ENCODE measurements at regions of chr12 and their contacts with region 1.

Region 1: DNA sequence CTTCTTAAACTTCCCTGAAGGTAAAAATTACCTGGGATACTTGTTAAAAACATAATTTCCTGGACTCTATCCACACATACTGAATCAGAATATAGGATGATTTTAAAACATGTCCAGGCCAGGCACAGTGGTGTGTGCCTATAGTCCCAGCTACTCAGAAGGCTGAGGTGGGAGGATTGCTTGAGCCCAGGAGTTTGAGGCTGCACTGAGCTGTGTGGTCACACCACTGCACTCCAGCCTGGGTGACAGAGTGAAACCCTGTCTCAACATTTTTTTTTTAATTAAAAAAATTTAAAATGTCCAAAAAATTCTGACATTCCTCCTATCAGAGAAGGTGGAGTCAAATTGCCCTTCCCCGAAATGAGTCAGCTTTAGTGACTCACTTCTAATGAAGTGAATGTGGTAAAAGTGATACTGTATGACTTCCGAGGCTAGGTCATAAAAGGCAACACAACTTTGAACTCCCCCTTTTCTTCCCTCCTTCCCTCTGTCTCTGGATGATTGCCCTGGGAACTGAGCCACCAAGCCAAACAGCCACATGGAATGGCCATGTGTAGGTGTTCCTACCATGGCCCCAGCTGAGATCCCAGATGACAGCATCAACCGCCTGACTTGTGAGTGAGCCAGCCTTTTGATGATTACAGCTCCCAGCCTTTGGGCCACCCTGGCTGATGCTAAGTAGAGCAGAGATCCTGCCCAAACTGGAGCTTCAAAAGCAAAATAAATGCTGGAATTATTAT is 36.3 kb downstream of the LIMA1 start:
- DNase-seq: peak; percentile 62
- ATAC-seq: peak; percentile 80
- H3K4me3 ChIP-seq: peak overlapping the region; percentile 5; the same call in 1 of the 2 replicates
- H3K27ac ChIP-seq: peak overlapping the region; percentile 83
- H3K4me1 ChIP-seq: peaks cover 38% of the 10 kb centered on the region
- H3K27me3 ChIP-seq: no peaks in the 10 kb centered on the region
- CTCF ChIP-seq: no peak
- EP300 ChIP-seq: peak in 1 of 2 experiments; percentile 65; a peak in 1 of 4 replicates
- POLR2A ChIP-seq: no peak
- RAD21 ChIP-seq: no peak

Region 2: GRCh38 chr12:50234347-50234746 is 12.7 kb before region 1 on chr12:
- CTCF ChIA-PET with region 1: interaction called, 7 read pairs
- POLR2A ChIA-PET with region 1: interaction called, 8 read pairs
- RAD21 ChIA-PET with region 1: interaction called, 6 read pairs
- SMC1A ChIA-PET with region 1: interaction called, 26 read pairs
- in situ Hi-C with region 1: no loop called
- intact Hi-C with region 1: no loop called
- DNase-seq: no peak
- ATAC-seq: peak; percentile 76
- H3K4me3 ChIP-seq: no peak overlapping the region
- H3K27ac ChIP-seq: no peak overlapping the region
- H3K4me1 ChIP-seq: no peaks in the 10 kb centered on the region
- H3K27me3 ChIP-seq: no peaks in the 10 kb centered on the region
- CTCF ChIP-seq: no peak
- EP300 ChIP-seq: no peak
- POLR2A ChIP-seq: no peak
- RAD21 ChIP-seq: no peak

Region 3: DNA sequence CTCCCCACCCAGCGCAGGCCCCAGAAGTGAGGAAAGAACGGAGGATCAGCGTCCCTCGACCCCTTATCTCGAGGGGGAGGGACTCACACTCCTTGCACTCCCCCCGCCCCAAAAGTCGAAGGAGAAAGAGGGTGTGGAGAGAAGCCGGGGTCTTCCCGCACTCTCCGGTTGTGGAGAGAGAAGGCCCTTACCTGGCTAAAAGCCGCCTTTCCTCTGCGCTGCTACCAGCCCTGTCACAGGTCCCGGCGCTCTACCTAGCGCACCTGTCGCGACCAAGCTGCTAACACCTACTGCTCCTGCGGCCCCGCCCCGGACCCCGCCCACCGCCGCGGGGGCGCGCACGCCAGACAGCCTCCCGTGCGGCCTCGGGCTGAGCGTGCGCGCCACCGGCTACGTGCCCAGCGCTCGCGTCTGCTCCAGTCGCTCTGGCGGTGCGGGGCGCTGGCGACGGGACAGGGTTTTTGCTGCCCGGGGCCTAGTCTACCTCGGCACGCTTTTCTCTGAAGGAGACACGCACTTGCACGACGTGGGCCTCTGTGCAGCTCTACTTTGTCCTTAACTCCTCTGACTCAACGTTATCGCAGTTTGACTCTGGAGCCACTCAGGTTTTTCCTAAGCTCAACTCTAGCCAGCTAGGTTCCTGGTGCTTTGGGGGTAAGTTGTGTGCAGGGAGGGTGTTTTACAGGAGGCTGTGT is 36.3 kb after region 1 on chr12 and contains the start of gene LIMA1:
- CTCF ChIA-PET with region 1: interaction called, 10 read pairs
- POLR2A ChIA-PET with region 1: interaction called, 7 read pairs
- RAD21 ChIA-PET with region 1: interaction called, 11 read pairs
- SMC1A ChIA-PET with region 1: interaction called, 11 read pairs
- in situ Hi-C with region 1: no loop called
- intact Hi-C with region 1: no loop called
- DNase-seq: peak; percentile 37
- ATAC-seq: peak; percentile 98
- H3K4me3 ChIP-seq: peak within 1 kb of the TSS; percentile 83
- H3K27ac ChIP-seq: peak within 1 kb of the TSS; percentile 66
- H3K4me1 ChIP-seq: peaks cover 10% of the 10 kb centered on the region
- H3K27me3 ChIP-seq: peaks cover 0 to 3% of the 10 kb centered on the region in 2 experiments; a peak in 2 of 4 replicates
- CTCF ChIP-seq: peak; percentile 19 to 37 (median 23); a peak in 2 of 6 replicates
- EP300 ChIP-seq: no peak
- POLR2A ChIP-seq: peak; percentile 93
- RAD21 ChIP-seq: peak; percentile 31
- polyA plus RNA-seq, gene LIMA1: 56.6 to 58.2 TPM

Region 4: DNA sequence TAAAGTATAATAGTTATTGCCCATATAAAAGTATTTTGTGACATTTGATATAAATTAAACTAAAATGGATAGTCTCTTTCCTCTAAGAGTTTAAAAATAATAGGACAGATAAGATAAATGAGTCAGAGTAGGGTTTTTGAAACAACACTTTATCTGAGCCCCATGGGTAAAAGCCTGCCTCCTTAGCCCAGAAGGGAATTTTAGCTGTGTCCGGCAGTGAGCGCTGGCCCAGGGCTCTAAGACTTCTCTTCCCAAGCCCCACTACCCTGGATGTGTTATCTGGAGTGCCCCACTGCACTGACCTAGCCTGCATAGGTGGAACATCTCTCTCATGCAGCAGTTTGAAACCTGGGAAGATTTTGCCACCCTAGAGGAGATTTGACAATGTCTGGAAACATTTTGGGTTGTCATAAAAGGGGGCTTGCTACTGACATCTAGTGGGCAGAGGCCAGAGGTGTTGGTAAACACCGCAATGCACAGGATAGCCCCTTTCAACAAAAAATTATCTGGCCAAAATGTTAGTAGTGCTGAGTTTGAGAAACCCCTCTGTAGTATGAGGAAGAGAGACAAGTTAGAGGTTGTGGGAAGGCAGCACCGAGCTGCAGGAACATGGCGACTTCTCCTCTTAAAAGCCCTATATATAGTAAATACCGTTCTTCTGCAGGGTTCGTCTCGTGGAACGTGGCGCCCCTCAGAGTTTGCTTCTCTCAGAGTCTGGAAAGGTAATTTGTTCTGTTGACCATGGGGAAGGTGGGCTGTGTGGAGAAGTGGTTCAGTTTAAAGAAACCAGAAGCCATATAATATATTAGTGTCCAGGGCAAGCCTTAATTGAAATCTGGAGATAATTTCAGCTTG is 487.6 kb after region 1 on chr12:
- CTCF ChIA-PET with region 1: no interaction called
- POLR2A ChIA-PET with region 1: no interaction called
- RAD21 ChIA-PET with region 1: no interaction called
- SMC1A ChIA-PET with region 1: no interaction called
- in situ Hi-C with region 1: no loop called
- intact Hi-C with region 1: no loop called
- DNase-seq: no peak
- ATAC-seq: peak; percentile 76
- H3K4me3 ChIP-seq: no peak overlapping the region
- H3K27ac ChIP-seq: no peak overlapping the region
- H3K4me1 ChIP-seq: no peaks in the 10 kb centered on the region
- H3K27me3 ChIP-seq: no peaks in the 10 kb centered on the region
- CTCF ChIP-seq: peak; percentile 58 to 64 (median 63)
- EP300 ChIP-seq: no peak
- POLR2A ChIP-seq: no peak
- RAD21 ChIP-seq: peak; percentile 65